ENCODE measurements at regions of chr14 and their contacts with region 1.

Region 1: GRCh38 chr14:59126710-59127432 is 61.6 kb upstream of the DAAM1 start:
- DNase-seq: peak; percentile 69
- H3K4me3 ChIP-seq: no peak overlapping the region
- H3K27ac ChIP-seq: no peak overlapping the region
- H3K4me1 ChIP-seq: no peaks in the 10 kb centered on the region
- H3K27me3 ChIP-seq: peaks cover 6% of the 10 kb centered on the region
- CTCF ChIP-seq: peak; percentile 81

Region 2: DNA sequence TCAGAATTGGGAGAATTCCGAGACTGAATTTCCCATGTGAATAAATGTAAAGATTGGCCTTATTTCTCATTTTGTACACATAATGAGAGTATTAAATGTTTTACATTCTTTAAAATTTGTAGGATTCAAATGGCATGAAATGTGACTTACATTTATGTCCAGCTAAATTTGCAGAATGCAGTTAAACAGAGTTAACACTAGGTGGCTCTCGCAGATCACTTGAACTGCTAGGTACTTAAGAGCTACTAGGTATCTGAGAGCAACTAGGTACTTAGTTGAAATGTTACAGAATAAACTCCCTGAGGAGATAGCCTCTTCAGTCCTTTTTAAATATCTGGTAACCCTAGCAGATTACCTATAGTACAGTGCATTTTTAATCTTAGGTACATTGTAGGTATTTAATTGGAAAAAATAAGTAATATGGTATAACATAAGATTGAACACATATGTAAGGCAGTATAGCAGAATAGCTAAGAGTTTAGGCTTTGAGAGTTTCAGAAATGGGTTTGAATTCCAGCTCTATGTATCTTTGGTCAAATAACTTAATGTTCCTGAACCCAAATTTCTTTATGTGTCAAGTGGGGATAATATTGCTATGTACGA is 625.6 kb before region 1 on chr14:
- CTCF ChIA-PET with region 1: interaction called, 4 read pairs
- POLR2A ChIA-PET with region 1: no interaction called
- intact Hi-C with region 1: loop called (anchors 5 kb)
- DNase-seq: peak; percentile 74
- H3K4me3 ChIP-seq: no peak overlapping the region
- H3K27ac ChIP-seq: no peak overlapping the region
- H3K4me1 ChIP-seq: no peaks in the 10 kb centered on the region
- H3K27me3 ChIP-seq: no peaks in the 10 kb centered on the region
- CTCF ChIP-seq: peak; percentile 89

Region 3: DNA sequence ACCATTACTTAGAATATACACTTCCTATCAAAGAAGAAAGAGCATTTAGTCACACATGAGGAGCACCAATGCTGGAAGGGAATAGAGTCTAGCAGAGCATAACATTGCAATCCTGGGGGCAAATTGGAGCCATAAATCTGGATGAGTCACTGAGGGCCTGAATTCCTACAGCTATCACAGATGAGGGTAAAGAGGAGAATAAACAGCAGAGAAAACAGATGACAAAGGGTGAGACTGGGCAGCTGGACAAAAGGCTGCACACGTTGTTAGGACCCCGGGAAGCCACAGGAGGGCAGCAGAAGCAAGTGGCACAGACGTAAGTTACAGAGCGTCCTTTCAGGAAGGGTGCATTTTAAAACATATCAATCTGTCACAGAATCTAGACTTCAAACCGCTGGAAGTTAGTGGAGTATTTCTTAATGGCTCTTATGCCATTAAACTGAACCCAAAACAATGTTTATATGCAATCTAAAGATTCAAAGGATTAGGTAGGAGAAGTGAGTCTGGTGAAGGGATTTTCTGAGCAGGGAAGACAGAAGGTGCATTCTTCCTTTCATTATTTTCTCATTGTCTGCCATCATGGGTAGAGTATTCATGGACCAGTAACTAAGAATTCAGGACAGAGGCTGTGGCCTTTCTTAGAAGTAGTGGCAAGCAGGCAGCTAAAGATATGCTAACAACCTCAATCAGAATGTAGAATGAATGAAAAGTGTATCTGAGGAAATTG is 98.2 kb before region 1 on chr14:
- CTCF ChIA-PET with region 1: interaction called, 3 read pairs
- POLR2A ChIA-PET with region 1: no interaction called
- intact Hi-C with region 1: loop called (anchors 2 kb)
- DNase-seq: peak; percentile 75
- H3K4me3 ChIP-seq: no peak overlapping the region
- H3K27ac ChIP-seq: no peak overlapping the region
- H3K4me1 ChIP-seq: no peaks in the 10 kb centered on the region
- H3K27me3 ChIP-seq: no peaks in the 10 kb centered on the region
- CTCF ChIP-seq: peak; percentile 90

Region 4: GRCh38 chr14:59428581-59429012 is 301.7 kb after region 1 on chr14:
- CTCF ChIA-PET with region 1: interaction called, 6 read pairs
- POLR2A ChIA-PET with region 1: no interaction called
- intact Hi-C with region 1: loop called (anchors 1 kb)
- DNase-seq: no peak
- H3K4me3 ChIP-seq: no peak overlapping the region
- H3K27ac ChIP-seq: no peak overlapping the region
- H3K4me1 ChIP-seq: no peaks in the 10 kb centered on the region
- H3K27me3 ChIP-seq: no peaks in the 10 kb centered on the region
- CTCF ChIP-seq: peak; percentile 30; the same call in 1 of the 2 replicates

Region 5: GRCh38 chr14:59439256-59439965 is 312.5 kb after region 1 on chr14:
- CTCF ChIA-PET with region 1: no interaction called
- POLR2A ChIA-PET with region 1: no interaction called
- intact Hi-C with region 1: loop called (anchors 1 kb)
- DNase-seq: no peak
- H3K4me3 ChIP-seq: no peak overlapping the region
- H3K27ac ChIP-seq: no peak overlapping the region
- H3K4me1 ChIP-seq: no peaks in the 10 kb centered on the region
- H3K27me3 ChIP-seq: peaks cover 3% of the 10 kb centered on the region
- CTCF ChIP-seq: no peak

Region 6: DNA sequence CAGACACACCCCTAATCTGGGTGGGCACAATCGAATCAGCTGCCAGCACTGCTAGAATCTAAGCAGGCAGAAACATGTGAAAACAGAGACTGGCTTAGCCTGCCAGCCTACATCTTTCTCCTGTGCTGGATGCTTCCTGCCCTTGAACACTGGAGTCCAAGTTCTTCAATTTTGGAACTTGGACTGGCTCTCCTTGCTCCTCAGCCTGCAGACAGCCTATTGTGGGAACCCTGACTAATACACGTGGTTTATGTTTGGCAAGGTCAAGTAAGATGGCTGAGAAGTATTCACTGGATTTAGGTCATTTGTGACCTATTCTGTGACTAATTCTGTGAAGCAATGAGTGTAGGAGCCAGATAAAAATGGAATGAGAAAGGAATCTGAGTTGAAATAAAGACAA is 327.3 kb after region 1 on chr14:
- CTCF ChIA-PET with region 1: no interaction called
- POLR2A ChIA-PET with region 1: interaction called, 11 read pairs
- intact Hi-C with region 1: no loop called
- DNase-seq: no peak
- H3K4me3 ChIP-seq: no peak overlapping the region
- H3K27ac ChIP-seq: no peak overlapping the region
- H3K4me1 ChIP-seq: no peaks in the 10 kb centered on the region
- H3K27me3 ChIP-seq: no peaks in the 10 kb centered on the region
- CTCF ChIP-seq: no peak

Region 7: GRCh38 chr14:59576332-59577294 is 449.7 kb after region 1 on chr14 and contains the start of gene CCDC175:
- CTCF ChIA-PET with region 1: no interaction called
- POLR2A ChIA-PET with region 1: no interaction called
- intact Hi-C with region 1: loop called (anchors 10 kb)
- DNase-seq: peak; percentile 69
- H3K4me3 ChIP-seq: no peak within 1 kb of the TSS
- H3K27ac ChIP-seq: no peak within 1 kb of the TSS
- H3K4me1 ChIP-seq: no peaks in the 10 kb centered on the region
- H3K27me3 ChIP-seq: no peaks in the 10 kb centered on the region
- CTCF ChIP-seq: peak; percentile 76
- total RNA-seq, gene CCDC175: 0.47 TPM in 1 of 2 replicates, not detected in the other

Region 8: DNA sequence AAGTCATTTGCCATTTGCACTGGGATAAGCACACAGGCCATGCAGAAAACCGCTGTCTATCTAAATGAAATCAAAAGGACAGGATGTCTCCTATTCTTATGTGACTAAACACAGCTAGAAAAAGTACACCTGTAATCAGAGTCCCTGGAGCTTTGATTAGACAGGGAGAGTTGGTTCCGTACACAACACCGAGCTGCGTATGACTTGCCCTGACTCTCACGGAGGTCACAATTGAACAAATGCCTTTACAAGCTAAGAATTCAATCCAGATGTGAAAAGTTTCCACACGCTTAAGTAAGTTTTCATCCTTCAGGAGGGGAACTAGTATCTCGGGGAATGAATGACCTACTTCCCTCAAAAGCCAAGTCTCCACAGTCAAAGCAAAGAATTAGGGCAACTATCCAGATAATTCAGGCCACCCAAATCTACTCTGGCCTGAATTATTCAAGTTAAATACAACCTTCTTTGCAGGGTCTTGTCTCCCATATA is 676.2 kb after region 1 on chr14:
- CTCF ChIA-PET with region 1: no interaction called
- POLR2A ChIA-PET with region 1: no interaction called
- intact Hi-C with region 1: no loop called
- DNase-seq: no peak
- H3K4me3 ChIP-seq: no peak overlapping the region
- H3K27ac ChIP-seq: no peak overlapping the region
- H3K4me1 ChIP-seq: no peaks in the 10 kb centered on the region
- H3K27me3 ChIP-seq: peaks cover 10% of the 10 kb centered on the region
- CTCF ChIP-seq: no peak